AG04449 (cell line): ENCODE measurements at regions of chr11 and their contacts with region 1.

Region 1: DNA sequence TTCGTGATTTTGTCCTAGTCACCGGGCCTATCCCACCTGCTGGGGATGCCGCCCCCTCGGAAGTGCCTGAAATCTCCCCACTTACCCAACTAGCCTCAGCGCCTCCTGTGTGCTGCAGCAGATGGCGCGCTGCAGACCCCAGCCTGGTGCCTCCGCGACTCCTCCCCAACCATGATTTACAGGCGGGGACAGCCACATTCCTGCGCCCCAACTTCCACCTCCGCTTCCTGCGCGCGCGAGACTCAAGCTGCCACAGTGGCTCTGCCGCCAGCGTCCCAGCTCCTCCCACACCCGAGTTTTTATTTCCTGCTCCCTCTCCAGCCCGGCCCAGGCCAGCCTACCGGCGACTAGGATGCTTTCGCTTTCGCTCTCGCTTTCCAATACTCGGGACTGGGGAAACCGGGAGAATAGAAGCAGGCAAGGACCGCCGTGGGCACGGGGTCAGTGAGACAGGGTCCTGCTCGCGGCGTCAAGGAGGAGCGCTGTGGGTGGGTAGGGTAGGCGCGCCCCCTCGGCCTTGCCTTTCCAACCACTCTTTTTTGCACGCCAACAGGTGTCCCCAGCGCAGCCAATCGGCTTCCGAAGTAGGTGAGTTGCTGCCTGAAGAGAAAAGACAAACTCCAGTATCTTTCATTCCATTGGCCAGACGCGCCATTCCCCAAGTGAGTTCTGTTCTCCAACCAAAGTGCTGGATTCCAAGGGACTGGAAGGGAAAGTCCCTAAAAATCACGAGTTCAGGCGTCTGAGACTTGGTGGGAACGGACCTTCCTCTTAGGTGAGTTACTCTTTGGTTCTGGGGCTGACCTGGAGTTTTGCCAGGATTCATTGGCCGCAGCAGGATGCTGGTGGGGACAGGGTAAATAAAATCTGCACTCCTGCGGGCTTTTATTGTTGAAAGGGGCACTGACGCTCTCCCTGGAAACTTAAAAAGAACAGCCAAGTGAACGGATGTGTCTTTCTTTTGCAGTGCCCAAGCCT is at the start of gene FAM111A:
- DNase-seq: peak; percentile 36
- H3K4me3 ChIP-seq: peak within 1 kb of the TSS; percentile 92
- CTCF ChIP-seq: peak; percentile 54

Region 2: DNA sequence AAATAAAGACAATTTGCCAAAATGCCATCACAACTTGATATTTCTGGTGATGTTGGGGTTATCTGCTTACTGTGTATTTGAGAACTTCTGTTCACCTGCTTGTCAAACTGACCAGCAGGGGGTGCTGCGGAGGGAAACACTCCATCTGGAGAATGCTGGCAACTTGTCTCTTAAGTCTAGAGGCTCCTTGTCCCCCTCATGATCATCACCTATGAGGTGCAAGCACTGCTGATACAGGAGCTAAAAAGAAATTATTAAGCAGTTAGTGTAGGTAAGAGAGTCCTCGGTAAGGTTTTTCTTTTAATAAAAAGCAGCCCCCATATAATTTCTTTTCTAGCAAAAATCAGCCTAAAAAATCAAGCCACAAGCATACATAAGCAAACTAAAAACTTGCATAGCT is 89.4 kb before region 1 on chr11:
- CTCF ChIA-PET with region 1: interaction called, 29 read pairs
- POLR2A ChIA-PET with region 1: no interaction called
- DNase-seq: no peak
- H3K4me3 ChIP-seq: no peak overlapping the region
- CTCF ChIP-seq: peak; percentile 69

Region 3: DNA sequence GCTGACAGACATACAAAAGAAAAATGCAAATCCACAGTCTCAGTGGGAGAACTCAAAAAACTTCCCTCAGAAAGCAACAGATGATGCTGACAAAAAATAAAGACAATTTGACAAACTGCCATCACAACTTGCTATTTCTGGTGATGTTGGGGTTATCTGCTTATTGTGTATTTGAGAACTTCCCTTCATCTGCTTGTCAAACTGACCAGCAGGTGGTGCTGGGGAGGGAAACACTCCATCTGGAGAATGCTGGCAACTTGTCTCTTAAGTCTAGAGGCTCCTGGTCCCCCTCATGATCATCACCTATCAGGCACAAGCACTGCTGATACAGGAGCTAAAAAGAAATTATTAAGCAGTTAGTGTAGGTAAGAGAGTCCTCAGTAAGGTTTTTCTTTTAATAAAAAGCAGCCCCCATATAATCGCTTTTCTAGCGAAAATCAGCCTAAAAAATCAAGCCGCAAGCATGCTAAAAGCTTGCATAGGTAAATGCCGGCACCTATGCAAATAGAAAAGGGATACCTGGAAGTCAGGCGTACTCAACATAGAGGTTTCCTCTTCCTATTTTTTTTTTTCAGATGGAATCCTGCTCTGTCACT is 45.6 kb before region 1 on chr11:
- CTCF ChIA-PET with region 1: interaction called, 13 read pairs
- POLR2A ChIA-PET with region 1: no interaction called
- DNase-seq: no peak
- H3K4me3 ChIP-seq: no peak overlapping the region
- CTCF ChIP-seq: peak; percentile 68

Region 4: GRCh38 chr11:59106363-59107336 is 36.2 kb before region 1 on chr11 and contains the start of gene FAM111B:
- CTCF ChIA-PET with region 1: interaction called, 15 read pairs
- POLR2A ChIA-PET with region 1: no interaction called
- DNase-seq: peak; percentile 47
- H3K4me3 ChIP-seq: peak within 1 kb of the TSS; percentile 68
- CTCF ChIP-seq: peak; percentile 23